ENCODE measurements at regions of chr1 and their contacts with region 1.

Region 1: GRCh38 chr1:236808564-236809130 is 13.6 kb downstream of the MTR start:
- DNase-seq: no peak
- CTCF ChIP-seq: no peak

Region 2: GRCh38 chr1:236495467-236496112 is 313.1 kb before region 1 on chr1:
- CTCF ChIA-PET with region 1: no interaction called
- POLR2A ChIA-PET with region 1: no interaction called
- DNase-seq: no peak
- CTCF ChIP-seq: no peak

Region 3: GRCh38 chr1:236795035-236795756 is 13.5 kb before region 1 on chr1 and contains the start of gene MTR:
- CTCF ChIA-PET with region 1: interaction called, 14 read pairs
- POLR2A ChIA-PET with region 1: no interaction called
- DNase-seq: peak; percentile 99
- CTCF ChIP-seq: no peak

Region 4: GRCh38 chr1:236821091-236821627 is 12.5 kb after region 1 on chr1:
- CTCF ChIA-PET with region 1: interaction called, 11 read pairs
- POLR2A ChIA-PET with region 1: no interaction called
- DNase-seq: no peak
- CTCF ChIP-seq: no peak

Region 5: DNA sequence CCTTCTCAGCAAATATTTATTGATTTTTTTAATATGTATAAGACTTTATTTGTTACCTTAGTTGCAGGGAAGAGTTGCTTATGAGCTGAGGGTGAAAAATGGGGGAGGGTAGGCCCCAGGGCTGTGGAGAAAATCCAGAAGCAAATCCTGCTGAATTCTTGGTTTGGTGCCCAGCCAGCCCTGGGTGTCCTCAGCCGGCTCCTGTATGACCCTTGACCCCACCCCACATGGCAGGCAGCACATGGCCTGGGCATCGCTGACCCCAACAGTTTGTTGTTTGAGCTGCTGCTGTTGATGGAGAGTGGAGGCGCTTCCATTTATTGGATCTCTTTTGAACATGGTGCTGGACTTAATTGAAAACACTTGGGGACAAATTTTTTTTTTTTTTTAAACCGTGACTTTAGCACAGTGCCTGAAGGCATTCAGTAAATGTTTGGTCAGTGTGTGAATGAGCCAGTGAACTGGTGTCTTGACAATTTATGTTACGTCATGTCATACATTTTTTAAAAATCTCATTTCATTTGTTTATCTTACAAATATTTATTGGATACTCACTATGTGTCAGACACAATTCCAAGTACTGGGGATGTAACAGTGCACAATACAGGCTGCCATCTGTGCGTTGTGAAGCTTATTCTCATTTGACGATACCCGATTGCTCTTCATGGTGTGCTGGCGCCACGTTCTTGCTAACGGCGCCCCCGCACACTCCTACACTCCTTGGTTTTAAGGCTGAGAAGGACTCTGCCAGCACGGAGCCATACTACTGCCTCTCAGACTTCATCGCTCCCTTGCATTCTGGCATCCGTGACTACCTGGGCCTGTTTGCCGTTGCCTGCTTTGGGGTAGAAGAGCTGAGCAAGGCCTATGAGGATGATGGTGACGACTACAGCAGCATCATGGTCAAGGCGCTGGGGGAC is 85.2 kb after region 1 on chr1:
- CTCF ChIA-PET with region 1: no interaction called
- POLR2A ChIA-PET with region 1: no interaction called
- DNase-seq: no peak
- CTCF ChIP-seq: no peak